ENCODE measurements at regions of chr2 and their contacts with region 1.

Region 1: GRCh38 chr2:86079981-86080911 is 25.4 kb downstream of the POLR1A start:
- DNase-seq: no peak
- H3K4me3 ChIP-seq: no peak overlapping the region
- H3K27ac ChIP-seq: no peak overlapping the region
- H3K4me1 ChIP-seq: peaks cover 17% of the 10 kb centered on the region
- H3K27me3 ChIP-seq: no peaks in the 10 kb centered on the region
- CTCF ChIP-seq: peak; percentile 52 to 74 (median 73)
- POLR2A ChIP-seq: no peak

Region 2: GRCh38 chr2:84832772-84833461 is 1247.3 kb before region 1 on chr2:
- intact Hi-C with region 1: no loop called
- DNase-seq: no peak
- H3K4me3 ChIP-seq: no peak overlapping the region
- H3K27ac ChIP-seq: no peak overlapping the region
- H3K4me1 ChIP-seq: no peaks in the 10 kb centered on the region
- H3K27me3 ChIP-seq: no peaks in the 10 kb centered on the region
- CTCF ChIP-seq: no peak
- POLR2A ChIP-seq: no peak

Region 3: DNA sequence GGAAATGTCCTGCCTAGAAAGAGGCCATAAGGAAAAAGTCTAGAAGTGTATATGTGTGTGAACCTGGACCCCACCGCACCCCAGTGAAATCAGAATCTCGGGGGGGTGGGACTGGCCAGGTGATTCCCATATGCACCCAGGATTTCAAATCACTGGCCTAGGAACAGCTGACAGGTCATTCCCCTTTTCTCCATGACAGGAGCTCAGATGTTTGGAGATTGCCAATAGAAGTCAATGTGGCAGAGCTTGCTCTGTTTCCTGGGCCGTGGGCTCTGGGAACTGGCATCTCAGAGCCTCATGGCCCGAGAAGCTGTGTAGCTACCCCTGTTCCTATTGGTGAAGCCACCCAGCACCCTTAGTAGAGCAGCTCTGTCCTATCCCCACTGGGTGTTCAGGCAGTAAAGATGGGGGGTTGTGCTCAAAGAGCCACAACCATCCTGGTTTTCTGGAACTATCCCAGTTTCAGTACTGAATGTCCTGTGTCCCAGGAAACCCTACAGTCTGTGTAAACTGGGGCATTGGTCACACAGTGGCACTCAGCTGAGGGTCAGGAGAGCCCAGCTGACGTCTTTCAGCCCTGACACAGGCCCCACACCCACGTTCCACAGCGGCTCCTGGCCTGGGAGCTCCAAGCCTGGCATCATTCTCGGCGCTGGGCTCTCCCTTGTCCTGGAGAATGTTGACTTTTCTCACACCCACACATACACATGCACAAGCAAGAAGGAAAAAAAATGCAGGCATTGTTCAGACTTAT is 367.2 kb before region 1 on chr2:
- intact Hi-C with region 1: loop called (anchors 10 kb)
- DNase-seq: peak; percentile 46 to 80
- H3K4me3 ChIP-seq: no peak overlapping the region
- H3K27ac ChIP-seq: peak overlapping the region; percentile 38
- H3K4me1 ChIP-seq: peaks cover 9% of the 10 kb centered on the region
- H3K27me3 ChIP-seq: no peaks in the 10 kb centered on the region
- CTCF ChIP-seq: no peak
- POLR2A ChIP-seq: no peak

Region 4: DNA sequence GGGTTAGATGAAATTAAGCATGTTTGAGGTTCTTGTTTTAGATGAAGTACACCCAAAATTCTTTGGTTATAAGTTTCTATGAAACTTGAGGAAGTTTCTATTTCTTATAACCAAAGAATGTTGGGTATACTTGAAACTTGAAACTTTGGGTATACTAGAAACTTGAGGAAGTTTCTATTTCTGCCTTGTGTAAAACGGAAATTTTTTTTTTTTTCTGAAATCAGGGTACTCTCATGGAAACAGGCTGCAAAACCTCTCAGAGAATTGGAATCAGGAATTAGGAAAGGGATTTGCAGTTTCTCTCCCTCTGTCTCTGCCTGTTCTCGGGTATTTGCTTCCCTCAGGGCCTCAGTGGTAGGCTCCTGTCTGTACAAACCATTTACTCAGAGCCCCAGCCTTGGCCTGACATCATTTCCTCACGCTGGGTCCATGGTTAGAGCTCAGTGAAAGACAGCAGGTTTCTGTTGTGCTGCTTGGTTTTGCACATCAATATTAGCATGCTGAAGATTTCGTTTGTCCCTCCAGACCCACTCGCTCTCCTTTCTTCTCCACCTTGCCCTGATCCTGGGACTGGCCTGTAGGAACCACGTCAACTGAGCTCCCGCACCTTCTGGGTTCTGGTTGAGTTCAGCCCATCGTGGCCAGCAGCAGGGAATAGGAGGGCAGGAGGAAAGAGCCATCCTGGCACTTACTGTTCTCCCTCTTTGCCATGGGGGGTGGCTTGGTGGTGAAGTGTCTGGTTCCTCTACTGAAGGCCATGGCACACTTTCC is 81.0 kb before region 1 on chr2:
- intact Hi-C with region 1: loop called (anchors 10 kb)
- DNase-seq: no peak
- H3K4me3 ChIP-seq: no peak overlapping the region
- H3K27ac ChIP-seq: peak overlapping the region; percentile 84
- H3K4me1 ChIP-seq: peaks cover 66% of the 10 kb centered on the region
- H3K27me3 ChIP-seq: no peaks in the 10 kb centered on the region
- CTCF ChIP-seq: no peak
- POLR2A ChIP-seq: no peak

Region 5: GRCh38 chr2:86118133-86118532 is 37.9 kb after region 1 on chr2:
- intact Hi-C with region 1: no loop called
- DNase-seq: no peak
- H3K4me3 ChIP-seq: no peak overlapping the region
- H3K27ac ChIP-seq: no peak overlapping the region
- H3K4me1 ChIP-seq: no peaks in the 10 kb centered on the region
- H3K27me3 ChIP-seq: no peaks in the 10 kb centered on the region
- CTCF ChIP-seq: no peak
- POLR2A ChIP-seq: no peak

Measured in vagina (tissue), 2 donors.